Activated B cell treated with CpG ODN at 0.5 μM for 24 hours (primary cell): ENCODE measurements at regions of chr2 and their contacts with region 1.

Region 1: DNA sequence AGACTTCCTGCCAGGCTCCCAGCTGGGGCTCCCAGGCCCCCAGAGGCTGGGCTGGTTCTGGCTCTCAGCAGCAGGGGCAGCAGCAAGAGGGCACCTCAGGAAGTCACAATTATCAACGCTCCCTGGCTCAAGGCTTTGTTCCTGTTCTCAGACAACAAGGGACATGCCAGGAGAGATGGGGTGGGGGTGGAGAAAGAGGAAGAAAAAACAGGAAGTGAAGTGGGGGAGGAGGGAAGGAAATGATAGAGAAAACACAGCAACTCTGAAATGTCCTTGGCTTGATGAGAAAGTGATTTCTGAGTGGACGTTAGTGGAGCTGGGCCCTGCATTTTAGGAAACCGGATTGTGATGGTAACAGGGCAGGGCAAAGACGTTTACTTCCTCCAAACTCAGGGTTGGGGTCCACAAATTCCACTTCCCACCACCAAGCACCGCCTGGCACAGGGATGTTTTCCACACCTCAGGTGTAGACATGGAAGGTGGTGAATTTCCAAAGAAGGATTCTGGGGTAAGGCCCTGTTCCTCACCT is 40.4 kb downstream of the CYRIA start:
- DNase-seq: no peak
- ATAC-seq: peak; percentile 55
- H3K4me3 Mint-ChIP-seq: peak overlapping the region; percentile 62
- H3K27ac Mint-ChIP-seq: peak overlapping the region; percentile 94
- H3K4me1 Mint-ChIP-seq: peaks cover 99% of the 10 kb centered on the region
- H3K27me3 Mint-ChIP-seq: no peaks in the 10 kb centered on the region
- CTCF ChIP-seq: no peak

Region 2: DNA sequence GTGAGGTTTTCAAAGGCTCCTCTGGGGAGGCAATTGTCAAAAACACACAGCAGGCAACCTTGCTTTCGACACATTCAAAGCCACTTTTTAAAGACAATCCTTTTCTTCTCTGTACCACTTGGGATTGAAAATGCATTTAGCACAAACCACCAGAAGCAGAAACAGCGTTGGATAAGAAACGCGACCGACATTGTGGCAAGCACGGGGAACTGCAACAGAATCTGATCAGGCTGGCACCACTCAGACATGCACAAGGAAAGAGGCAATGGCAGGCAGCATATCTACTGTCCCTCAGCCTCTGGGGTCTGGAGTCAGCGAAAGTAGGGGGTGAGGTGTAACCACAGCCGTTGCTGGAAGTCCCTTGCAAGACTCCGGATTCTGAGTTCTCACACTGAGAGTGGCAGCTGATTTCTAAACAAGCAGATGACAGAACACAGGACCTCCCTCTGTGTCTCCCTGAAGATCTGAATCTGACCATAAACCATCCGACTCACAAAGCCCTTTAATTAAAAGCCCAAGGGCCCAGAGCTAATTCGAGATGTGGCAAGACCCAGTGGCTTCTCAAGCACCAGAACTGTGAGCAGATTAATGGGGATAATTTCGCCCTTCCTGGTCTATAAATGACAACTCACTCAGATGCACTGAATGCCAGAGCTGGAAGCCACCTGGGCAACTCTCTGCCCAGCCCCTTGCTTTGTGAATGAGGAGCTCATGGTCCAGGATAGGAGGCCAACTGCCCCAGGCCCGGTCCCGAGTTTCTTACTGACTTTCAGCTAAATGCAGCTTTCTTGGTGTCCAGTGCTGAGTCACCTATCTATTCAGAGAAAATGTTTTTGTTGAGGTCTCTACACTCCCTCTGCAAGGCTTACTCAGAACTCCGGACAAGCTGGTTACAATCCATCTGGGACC is 10.8 kb after region 1 on chr2:
- CTCF ChIA-PET with region 1: interaction called, 10 read pairs
- POLR2A ChIA-PET with region 1: interaction called, 4 read pairs
- intact Hi-C with region 1: loop called (anchors 1 kb)
- DNase-seq: no peak
- ATAC-seq: peak; percentile 63
- H3K4me3 Mint-ChIP-seq: no peak overlapping the region
- H3K27ac Mint-ChIP-seq: peak overlapping the region; percentile 65
- H3K4me1 Mint-ChIP-seq: peaks cover 93% of the 10 kb centered on the region
- H3K27me3 Mint-ChIP-seq: no peaks in the 10 kb centered on the region
- CTCF ChIP-seq: no peak

Region 3: GRCh38 chr2:16656784-16657391 is 31.6 kb after region 1 on chr2:
- CTCF ChIA-PET with region 1: interaction called, 12 read pairs
- POLR2A ChIA-PET with region 1: interaction called, 84 read pairs
- intact Hi-C with region 1: loop called (anchors 1 kb)
- DNase-seq: no peak
- ATAC-seq: peak; percentile 59
- H3K4me3 Mint-ChIP-seq: peak overlapping the region; percentile 77
- H3K27ac Mint-ChIP-seq: peak overlapping the region; percentile 89
- H3K4me1 Mint-ChIP-seq: peaks cover 99% of the 10 kb centered on the region
- H3K27me3 Mint-ChIP-seq: no peaks in the 10 kb centered on the region
- CTCF ChIP-seq: no peak

Region 4: DNA sequence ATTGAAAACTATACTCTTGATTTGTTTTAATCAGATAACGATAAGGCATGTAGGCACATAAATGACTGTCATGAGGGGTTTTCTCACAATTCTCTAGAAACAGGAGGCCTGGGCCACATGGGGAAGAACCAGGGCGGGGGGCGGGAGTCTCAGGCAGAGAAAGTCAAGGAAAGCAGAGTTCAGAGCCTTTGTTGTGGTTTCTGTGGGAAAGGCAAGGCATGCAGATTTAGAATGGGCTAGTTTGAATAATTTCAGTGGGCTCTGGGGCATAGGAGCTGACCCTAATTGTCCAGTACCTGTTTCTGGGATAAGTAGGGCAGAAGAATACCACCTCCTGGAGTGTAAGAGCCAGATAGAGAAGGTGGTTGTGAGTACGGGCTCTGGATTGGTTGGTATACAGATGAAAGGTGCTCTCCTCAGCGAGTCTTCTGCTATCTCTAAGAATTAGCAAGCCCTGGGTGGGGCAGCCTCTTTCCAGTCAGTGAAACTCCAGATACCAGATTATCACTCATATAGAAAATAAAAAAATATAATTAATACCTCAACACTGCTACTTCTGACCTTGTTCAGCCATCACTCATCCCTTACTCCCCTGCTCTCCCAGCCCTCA is 81.9 kb after region 1 on chr2:
- CTCF ChIA-PET with region 1: no interaction called
- POLR2A ChIA-PET with region 1: interaction called, 11 read pairs
- intact Hi-C with region 1: no loop called
- DNase-seq: no peak
- ATAC-seq: no peak
- H3K4me3 Mint-ChIP-seq: no peak overlapping the region
- H3K27ac Mint-ChIP-seq: no peak overlapping the region
- H3K4me1 Mint-ChIP-seq: peaks cover 12% of the 10 kb centered on the region
- H3K27me3 Mint-ChIP-seq: no peaks in the 10 kb centered on the region
- CTCF ChIP-seq: no peak

Region 5: DNA sequence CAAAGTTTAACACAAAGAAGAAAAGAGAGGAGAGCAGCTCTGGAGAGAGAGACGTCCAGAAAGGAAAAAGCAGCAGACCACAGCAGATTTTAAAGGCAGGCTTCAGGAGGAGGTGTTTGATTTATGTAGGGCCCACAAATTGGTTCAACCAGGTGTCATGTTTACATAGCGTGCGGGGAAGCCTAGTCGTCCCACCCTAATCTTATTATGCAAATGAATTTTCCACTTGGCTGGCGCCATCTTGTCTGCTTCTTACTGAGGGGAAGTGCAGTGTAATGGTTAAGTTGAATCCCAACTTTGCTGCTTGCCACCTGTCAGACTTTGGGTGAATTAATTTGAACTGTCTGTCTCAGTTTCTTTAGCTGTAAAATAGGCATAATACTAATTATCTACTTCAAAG is 322.8 kb after region 1 on chr2:
- CTCF ChIA-PET with region 1: no interaction called
- POLR2A ChIA-PET with region 1: no interaction called
- intact Hi-C with region 1: loop called (anchors 5 kb)
- DNase-seq: no peak
- ATAC-seq: peak; percentile 83
- H3K4me3 Mint-ChIP-seq: peak overlapping the region; percentile 45
- H3K27ac Mint-ChIP-seq: peak overlapping the region; percentile 78
- H3K4me1 Mint-ChIP-seq: peaks cover 33% of the 10 kb centered on the region
- H3K27me3 Mint-ChIP-seq: no peaks in the 10 kb centered on the region
- CTCF ChIP-seq: no peak

Region 6: DNA sequence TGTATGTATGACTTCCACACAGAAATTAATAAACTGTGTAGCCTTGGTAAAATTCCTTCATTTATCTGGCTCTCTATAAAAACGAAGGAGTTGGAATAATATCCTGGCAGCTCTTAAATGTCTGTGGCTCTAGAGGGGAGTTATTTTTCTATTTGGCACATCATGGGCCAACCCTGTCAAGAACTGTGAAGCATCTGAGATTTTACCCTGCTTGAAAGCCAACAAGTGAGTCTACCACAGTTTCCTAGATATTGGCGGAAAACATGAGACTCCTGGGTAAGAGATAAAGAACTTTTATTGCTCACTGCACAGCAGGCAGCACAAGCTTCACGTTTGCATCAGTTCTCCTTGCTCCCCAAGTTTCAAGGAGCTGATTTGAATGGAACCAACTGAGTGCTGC is 387.0 kb after region 1 on chr2:
- CTCF ChIA-PET with region 1: no interaction called
- POLR2A ChIA-PET with region 1: no interaction called
- intact Hi-C with region 1: no loop called
- DNase-seq: no peak
- ATAC-seq: no peak
- H3K4me3 Mint-ChIP-seq: no peak overlapping the region
- H3K27ac Mint-ChIP-seq: no peak overlapping the region
- H3K4me1 Mint-ChIP-seq: peaks cover 2% of the 10 kb centered on the region
- H3K27me3 Mint-ChIP-seq: no peaks in the 10 kb centered on the region
- CTCF ChIP-seq: no peak